BJ (cell line): ENCODE measurements at regions of chr10 and their contacts with region 1.

Region 1: GRCh38 chr10:47311932-47312662 is 10.2 kb upstream of the GDF2 start:
- DNase-seq: peak; percentile 1
- H3K4me3 ChIP-seq: no peak overlapping the region
- H3K27me3 ChIP-seq: peaks cover 1% of the 10 kb centered on the region; the same call in 1 of the 2 replicates
- CTCF ChIP-seq: peak; percentile 96

Region 2: DNA sequence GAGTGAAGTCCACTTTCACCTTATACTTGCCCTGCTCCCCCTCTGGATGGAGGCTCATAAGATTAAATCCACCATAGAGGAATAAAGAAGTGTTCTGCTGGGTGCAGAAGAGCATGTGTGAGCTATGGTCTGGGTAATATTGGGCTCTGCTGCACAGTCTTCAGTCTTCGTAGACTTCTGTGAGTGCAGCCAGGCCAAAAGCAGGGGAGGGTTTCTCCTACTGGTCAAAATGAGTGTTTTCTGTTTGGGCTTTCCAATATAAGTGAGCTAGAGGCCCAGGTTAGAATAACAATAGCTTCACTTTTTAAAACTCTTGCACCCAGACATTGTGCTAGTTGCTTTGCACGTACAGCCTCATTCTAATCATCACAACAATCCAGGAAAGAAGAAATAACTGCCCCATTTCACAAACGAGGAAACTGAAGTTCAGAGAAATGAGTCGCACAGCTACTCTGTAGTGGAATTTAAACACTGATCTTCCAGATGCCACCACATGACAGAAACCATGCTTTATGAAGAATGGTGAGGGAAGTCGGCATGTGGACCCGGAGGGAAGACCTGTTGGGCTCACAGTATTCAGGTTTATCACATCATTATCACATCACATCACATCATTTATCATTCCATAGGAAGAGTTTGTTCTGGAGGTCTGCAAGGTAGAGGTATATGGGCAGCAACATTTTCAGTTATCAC is 1242.2 kb before region 1 on chr10:
- CTCF ChIA-PET with region 1: no interaction called
- POLR2A ChIA-PET with region 1: no interaction called
- DNase-seq: no peak
- H3K4me3 ChIP-seq: no peak overlapping the region
- H3K27me3 ChIP-seq: no peaks in the 10 kb centered on the region
- CTCF ChIP-seq: no peak

Region 3: DNA sequence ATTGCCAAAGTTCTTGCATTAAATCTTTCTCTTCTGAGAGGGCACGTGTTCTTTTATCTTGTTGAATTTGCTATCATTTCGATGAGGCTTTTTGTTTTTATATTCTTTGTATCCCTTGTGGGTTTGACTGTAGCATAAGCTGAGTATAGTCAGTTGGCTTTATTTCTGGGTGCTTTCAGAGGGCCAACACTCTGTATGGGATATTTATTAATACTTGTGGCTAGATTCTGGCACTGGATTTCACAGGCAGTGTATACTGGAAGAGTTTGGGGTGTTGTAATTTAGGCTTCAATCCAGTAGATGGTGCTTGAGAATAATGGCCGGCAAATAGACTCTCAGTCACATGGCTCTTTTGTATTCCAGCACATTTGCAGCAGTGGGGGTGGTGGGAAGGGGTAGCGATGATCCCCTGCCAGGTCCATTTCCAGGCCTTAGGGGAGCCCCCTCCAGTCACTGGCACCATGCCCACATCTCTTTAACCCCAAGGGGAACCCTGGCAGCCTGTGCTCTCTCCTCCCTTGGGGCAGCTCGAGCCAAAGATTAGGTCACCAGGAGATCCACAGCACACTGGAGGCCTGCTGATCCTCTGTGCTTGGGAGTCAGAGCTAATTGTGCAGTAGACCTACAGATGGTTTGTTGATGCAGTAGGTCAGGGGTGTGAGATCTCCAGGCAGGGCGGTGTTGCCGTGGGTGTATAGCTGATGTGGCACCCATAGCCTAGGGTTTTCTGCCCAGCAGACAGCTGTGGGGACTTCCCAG is 319.1 kb before region 1 on chr10:
- CTCF ChIA-PET with region 1: interaction called, 68 read pairs
- POLR2A ChIA-PET with region 1: no interaction called
- DNase-seq: no peak
- H3K4me3 ChIP-seq: no peak overlapping the region
- H3K27me3 ChIP-seq: no peaks in the 10 kb centered on the region; the same call in 1 of the 2 replicates
- CTCF ChIP-seq: peak; percentile 49

Region 4: DNA sequence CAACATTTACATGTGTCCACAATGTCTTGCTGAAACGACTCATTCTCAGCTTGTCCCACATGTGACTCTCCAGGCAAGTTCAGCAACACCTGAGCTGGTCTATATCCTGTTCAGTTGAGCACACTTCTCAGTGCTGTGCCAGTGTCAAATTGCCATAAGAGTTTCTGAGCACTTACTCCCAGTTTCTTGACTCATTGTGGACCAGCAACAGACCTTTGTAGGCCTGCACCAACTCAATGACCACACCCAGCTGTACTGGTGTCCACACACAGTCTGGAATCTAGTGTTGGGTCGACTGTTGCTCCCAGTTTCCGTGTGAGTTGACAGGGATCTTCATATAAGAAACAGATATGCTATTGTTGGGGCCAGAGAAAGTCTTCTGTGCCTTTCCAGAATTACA is 312.9 kb before region 1 on chr10:
- CTCF ChIA-PET with region 1: interaction called, 68 read pairs
- POLR2A ChIA-PET with region 1: no interaction called
- DNase-seq: no peak
- H3K4me3 ChIP-seq: no peak overlapping the region
- H3K27me3 ChIP-seq: no peaks in the 10 kb centered on the region; the same call in 1 of the 2 replicates
- CTCF ChIP-seq: no peak

Region 5: GRCh38 chr10:47024399-47025252 is 287.5 kb before region 1 on chr10:
- CTCF ChIA-PET with region 1: interaction called, 107 read pairs
- POLR2A ChIA-PET with region 1: no interaction called
- DNase-seq: no peak
- H3K4me3 ChIP-seq: no peak overlapping the region
- H3K27me3 ChIP-seq: no peaks in the 10 kb centered on the region
- CTCF ChIP-seq: peak; percentile 89

Region 6: GRCh38 chr10:47031211-47031900 is 280.7 kb before region 1 on chr10:
- CTCF ChIA-PET with region 1: interaction called, 107 read pairs
- POLR2A ChIA-PET with region 1: no interaction called
- DNase-seq: no peak
- H3K4me3 ChIP-seq: no peak overlapping the region
- H3K27me3 ChIP-seq: no peaks in the 10 kb centered on the region
- CTCF ChIP-seq: no peak

Region 7: DNA sequence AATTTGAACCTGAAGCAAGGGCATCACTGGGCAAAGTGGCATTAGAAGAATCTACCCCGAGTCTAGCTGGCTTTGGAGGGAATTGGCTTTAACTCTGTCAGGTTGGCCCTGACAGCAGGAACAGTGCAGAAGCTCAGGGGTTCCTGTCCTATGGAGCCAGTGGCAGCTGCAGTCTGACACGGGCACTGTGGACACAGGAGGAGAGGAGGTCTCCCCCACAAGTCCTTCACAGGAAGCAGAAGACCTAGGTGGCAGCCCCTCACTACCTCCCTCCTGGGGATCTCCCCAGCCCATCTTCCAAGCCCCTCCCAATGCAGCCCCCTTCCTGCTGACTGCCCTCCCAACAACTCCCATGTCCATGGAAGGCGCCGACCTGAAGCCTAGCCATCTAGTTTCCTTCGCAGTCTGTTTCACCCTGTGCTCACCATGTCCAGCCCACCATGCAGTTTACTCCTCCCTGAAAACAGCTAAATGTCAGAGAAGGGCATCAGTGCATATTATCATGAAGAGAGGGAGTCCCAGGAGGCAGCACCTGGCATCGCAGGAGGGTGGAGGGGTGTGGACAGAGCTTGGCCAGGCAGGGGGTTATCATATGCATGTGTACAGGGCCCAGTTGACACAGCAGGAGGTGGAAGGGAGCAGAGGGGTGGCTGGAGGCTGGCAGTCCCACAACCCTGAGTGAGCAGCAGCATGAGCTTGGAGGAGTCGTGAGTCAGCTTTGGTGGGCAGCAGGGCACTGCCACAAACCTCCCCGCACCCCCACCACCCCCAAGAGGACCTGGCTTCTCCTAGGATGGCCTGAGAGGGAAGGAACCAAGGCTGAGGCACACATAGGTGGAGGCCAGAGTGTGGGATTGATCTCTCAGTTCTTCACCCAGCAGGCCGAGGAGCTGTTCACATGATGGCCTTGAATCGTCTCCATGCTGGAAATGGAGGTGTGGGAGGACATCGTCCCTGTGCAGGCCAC is 29.8 kb before region 1 on chr10:
- CTCF ChIA-PET with region 1: no interaction called
- POLR2A ChIA-PET with region 1: no interaction called
- DNase-seq: no peak
- H3K4me3 ChIP-seq: no peak overlapping the region
- H3K27me3 ChIP-seq: no peaks in the 10 kb centered on the region
- CTCF ChIP-seq: no peak

Region 8: GRCh38 chr10:47300429-47300931 is 11.6 kb before region 1 on chr10:
- CTCF ChIA-PET with region 1: interaction called, 11 read pairs
- POLR2A ChIA-PET with region 1: no interaction called
- DNase-seq: no peak
- H3K4me3 ChIP-seq: no peak overlapping the region
- H3K27me3 ChIP-seq: peaks cover 20% of the 10 kb centered on the region
- CTCF ChIP-seq: no peak

Region 9: GRCh38 chr10:47340608-47341170 is 28.6 kb after region 1 on chr10:
- CTCF ChIA-PET with region 1: interaction called, 11 read pairs
- POLR2A ChIA-PET with region 1: no interaction called
- DNase-seq: no peak
- H3K4me3 ChIP-seq: no peak overlapping the region
- H3K27me3 ChIP-seq: peaks cover 10% of the 10 kb centered on the region
- CTCF ChIP-seq: peak; percentile 97